Caco-2 (cell line): ENCODE measurements at regions of chr2 and their contacts with region 1.

Region 1: DNA sequence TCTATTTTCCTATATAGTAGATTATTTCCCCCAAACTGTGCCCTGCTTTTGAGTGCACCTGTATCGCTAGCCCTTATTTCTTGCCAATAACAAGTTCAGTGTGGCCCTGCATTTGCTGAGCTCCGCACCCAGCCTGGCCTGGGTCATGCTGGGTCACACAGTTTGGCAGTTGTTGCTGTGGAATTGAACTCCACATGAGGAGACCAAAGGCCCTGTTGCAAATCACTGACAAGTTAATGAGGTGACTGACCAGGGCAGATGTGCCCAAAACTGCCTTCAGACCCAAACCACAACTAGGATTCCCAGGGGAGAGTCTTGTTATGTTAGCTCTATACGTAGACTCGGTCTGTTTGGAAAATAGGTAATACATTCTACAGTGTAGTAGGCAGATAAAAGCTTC is 31.0 kb downstream of the COL4A4 start:
- DNase-seq: no peak
- H3K4me3 ChIP-seq: no peak overlapping the region
- H3K4me3 Mint-ChIP-seq: no peak overlapping the region
- H3K27ac Mint-ChIP-seq: no peak overlapping the region
- H3K4me1 ChIP-seq: no peaks in the 10 kb centered on the region; the same call in 1 of the 2 replicates
- H3K4me1 Mint-ChIP-seq: peaks cover 22% of the 10 kb centered on the region
- H3K27me3 ChIP-seq: no peaks in the 10 kb centered on the region
- H3K27me3 Mint-ChIP-seq: no peaks in the 10 kb centered on the region
- CTCF ChIP-seq: no peak

Region 2: GRCh38 chr2:227103583-227103982 is 29.4 kb before region 1 on chr2:
- CTCF ChIA-PET with region 1: no interaction called
- POLR2A ChIA-PET with region 1: no interaction called
- intact Hi-C with region 1: no loop called
- DNase-seq: no peak
- H3K4me3 ChIP-seq: no peak overlapping the region
- H3K4me3 Mint-ChIP-seq: no peak overlapping the region
- H3K27ac Mint-ChIP-seq: no peak overlapping the region
- H3K4me1 ChIP-seq: no peaks in the 10 kb centered on the region
- H3K4me1 Mint-ChIP-seq: no peaks in the 10 kb centered on the region
- H3K27me3 ChIP-seq: no peaks in the 10 kb centered on the region
- H3K27me3 Mint-ChIP-seq: no peaks in the 10 kb centered on the region
- CTCF ChIP-seq: no peak

Region 3: DNA sequence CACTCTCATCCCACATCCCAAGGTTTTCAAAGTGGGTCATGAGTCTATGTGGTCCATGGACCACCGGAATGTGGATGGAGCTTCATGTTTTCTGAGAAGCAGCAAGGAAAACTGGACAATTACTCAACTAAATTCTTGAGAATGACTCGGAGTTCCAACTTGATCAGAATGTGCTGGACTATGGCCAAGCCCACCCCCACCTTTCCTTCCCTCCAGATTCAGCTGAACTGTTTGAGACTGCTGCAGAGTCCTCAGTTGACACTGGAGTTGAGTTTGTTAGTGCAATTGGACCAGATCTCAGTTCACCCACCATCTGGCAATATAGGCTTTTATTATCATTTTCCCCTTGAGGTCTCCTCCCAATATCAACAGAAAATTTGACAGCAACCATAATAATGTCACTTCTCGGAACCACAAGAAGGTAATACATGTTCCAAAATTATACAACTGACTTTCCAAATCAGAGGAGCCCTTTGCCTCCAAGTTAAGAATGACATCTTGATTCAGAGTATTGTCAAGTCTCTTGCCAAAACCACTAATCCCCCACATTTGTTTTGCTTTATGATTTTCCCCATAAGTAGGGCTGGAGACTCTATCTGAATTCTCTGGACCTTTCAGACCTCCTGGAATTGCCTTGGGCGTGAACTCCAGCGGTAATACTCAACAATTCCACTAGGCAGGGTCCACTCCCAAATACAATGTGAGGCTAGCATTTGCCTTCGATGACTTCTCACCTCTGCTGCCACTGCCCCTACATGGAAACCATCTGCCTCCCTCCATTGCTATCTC is 22.2 kb after region 1 on chr2:
- CTCF ChIA-PET with region 1: no interaction called
- POLR2A ChIA-PET with region 1: no interaction called
- intact Hi-C with region 1: no loop called
- DNase-seq: no peak
- H3K4me3 ChIP-seq: no peak overlapping the region
- H3K4me3 Mint-ChIP-seq: no peak overlapping the region
- H3K27ac Mint-ChIP-seq: no peak overlapping the region
- H3K4me1 ChIP-seq: peaks cover 7% of the 10 kb centered on the region; the same call in 1 of the 2 replicates
- H3K4me1 Mint-ChIP-seq: peaks cover 17% of the 10 kb centered on the region
- H3K27me3 ChIP-seq: no peaks in the 10 kb centered on the region
- H3K27me3 Mint-ChIP-seq: no peaks in the 10 kb centered on the region
- CTCF ChIP-seq: no peak

Region 4: DNA sequence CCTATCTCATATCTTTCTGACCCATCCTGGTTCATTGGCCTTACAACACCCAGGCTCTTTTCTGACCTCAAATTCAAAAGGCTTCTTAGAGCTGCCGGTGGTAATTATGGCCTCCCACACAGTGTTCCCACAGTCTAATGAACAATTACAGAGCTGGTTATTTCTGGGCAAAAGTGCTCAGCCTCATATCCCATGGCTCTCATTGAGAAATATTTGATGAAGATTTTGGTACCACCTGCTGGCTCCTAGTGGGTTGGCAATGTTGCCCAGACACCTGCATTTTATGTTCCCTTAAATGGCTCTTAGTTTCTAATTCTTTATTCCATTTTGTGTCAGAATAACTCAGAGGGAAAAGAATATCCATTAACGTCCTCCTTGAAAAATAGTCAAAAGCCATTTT is 445.7 kb after region 1 on chr2:
- CTCF ChIA-PET with region 1: no interaction called
- POLR2A ChIA-PET with region 1: no interaction called
- intact Hi-C with region 1: loop called (anchors 10 kb)
- DNase-seq: no peak
- H3K4me3 ChIP-seq: no peak overlapping the region
- H3K4me3 Mint-ChIP-seq: no peak overlapping the region
- H3K27ac Mint-ChIP-seq: no peak overlapping the region
- H3K4me1 ChIP-seq: peaks cover 12% of the 10 kb centered on the region; the same call in 1 of the 2 replicates
- H3K4me1 Mint-ChIP-seq: peaks cover 20% of the 10 kb centered on the region
- H3K27me3 ChIP-seq: no peaks in the 10 kb centered on the region
- H3K27me3 Mint-ChIP-seq: no peaks in the 10 kb centered on the region
- CTCF ChIP-seq: no peak